IMR-90 (cell line): ENCODE measurements at regions of chr17 and their contacts with region 1.

Region 1: DNA sequence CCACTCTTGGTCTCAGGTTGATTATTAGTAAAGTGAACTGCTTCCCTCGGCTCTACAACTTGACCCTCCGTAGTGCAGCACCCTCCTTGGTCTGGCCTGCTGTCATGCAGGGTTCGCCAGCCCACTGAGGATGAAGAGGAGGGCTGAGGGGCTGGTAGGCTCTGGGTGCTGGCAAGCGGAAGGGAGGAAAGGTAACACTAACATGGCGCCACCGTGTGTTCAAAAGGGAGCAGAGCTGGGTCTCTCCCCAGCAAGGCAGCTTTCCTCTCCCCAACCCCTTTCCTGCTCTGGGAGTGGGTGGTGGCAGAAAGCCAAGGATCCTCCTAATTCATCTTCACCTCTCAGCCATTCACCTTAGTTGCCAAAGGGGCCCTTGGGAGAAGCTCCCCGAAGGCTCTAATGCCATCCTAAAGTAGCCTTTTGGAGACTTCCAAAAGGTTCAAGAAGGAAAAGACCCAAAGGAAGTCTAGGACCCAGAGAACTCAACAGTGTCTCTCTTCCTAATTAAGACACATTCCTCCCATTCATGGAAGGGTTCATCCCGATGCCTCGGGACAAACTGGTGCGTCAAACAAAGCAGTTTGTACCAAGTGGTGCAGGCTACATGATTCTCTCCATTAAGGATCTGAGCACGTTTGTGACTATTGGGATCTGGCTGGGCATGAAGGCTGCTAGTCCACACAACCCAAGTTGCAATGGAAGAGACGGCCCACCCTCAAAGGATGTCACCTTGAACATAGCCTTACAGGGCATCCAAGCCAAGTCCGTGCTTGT is 90.8 kb upstream of the TOB1 start:
- DNase-seq: peak; percentile 54
- ATAC-seq: peak; percentile 78
- H3K4me3 ChIP-seq: no peak overlapping the region
- H3K27ac ChIP-seq: no peak overlapping the region
- H3K4me1 ChIP-seq: peaks cover 20% of the 10 kb centered on the region
- H3K27me3 ChIP-seq: no peaks in the 10 kb centered on the region
- CTCF ChIP-seq: peak; percentile 78
- POLR2A ChIP-seq: peak; percentile 40; the same call in 1 of the 2 replicates
- RAD21 ChIP-seq: peak; percentile 78

Region 2: GRCh38 chr17:50783193-50783660 is 173.7 kb before region 1 on chr17:
- CTCF ChIA-PET with region 1: interaction called, 6 read pairs
- POLR2A ChIA-PET with region 1: interaction called, 3 read pairs
- dilution Hi-C with region 1: no loop called
- in situ Hi-C with region 1: loop called (anchors 5 kb)
- intact Hi-C with region 1: loop called (anchors 1 kb)
- DNase-seq: peak; percentile 85
- ATAC-seq: peak; percentile 96
- H3K4me3 ChIP-seq: no peak overlapping the region
- H3K27ac ChIP-seq: no peak overlapping the region
- H3K4me1 ChIP-seq: peaks cover 12% of the 10 kb centered on the region
- H3K27me3 ChIP-seq: peaks cover 2% of the 10 kb centered on the region
- CTCF ChIP-seq: peak; percentile 99
- POLR2A ChIP-seq: 0 out of 2 replicates have a peak, but pooled peaks have one; percentile 36
- RAD21 ChIP-seq: peak; percentile 99

Region 3: DNA sequence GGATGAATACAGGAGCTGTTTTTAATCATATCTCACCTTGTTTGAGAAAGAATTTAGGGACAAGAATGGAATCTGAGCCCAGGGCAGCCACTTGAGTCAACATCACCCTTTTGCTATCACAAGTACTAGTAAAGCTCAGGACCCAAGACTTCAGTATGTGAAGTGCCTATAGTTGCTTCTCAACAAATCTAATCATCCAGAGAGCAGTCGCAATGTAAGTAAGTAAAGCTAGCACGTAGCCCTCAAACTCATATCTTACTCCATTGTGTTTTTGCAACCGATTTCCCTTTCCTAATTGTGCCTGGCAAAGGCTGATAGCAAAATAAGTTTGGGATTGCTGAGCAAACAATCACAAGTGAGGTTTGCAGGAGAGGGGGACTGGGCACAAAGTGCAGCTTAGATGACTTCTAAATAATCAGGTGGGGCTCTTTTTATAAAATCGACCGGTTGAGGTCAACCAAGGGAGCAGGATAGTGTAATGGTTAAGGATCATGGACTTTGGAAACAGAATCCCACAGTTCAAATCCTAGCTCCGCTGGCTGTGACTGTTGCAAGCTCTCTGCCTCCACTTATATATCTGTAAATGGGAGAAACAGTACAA is 103.8 kb before region 1 on chr17:
- CTCF ChIA-PET with region 1: interaction called, 21 read pairs
- POLR2A ChIA-PET with region 1: interaction called, 4 read pairs
- dilution Hi-C with region 1: no loop called
- in situ Hi-C with region 1: no loop called
- intact Hi-C with region 1: loop called (anchors 1 kb)
- DNase-seq: no peak
- ATAC-seq: no peak
- H3K4me3 ChIP-seq: no peak overlapping the region
- H3K27ac ChIP-seq: no peak overlapping the region
- H3K4me1 ChIP-seq: 0 out of 2 replicates have a peak, but pooled peaks cover 2% of the 10 kb centered on the region
- H3K27me3 ChIP-seq: no peaks in the 10 kb centered on the region; the same call in 1 of the 2 replicates
- CTCF ChIP-seq: no peak
- POLR2A ChIP-seq: no peak
- RAD21 ChIP-seq: no peak

Region 4: GRCh38 chr17:51153210-51154072 is 196.5 kb after region 1 on chr17 and contains the start of gene NME1:
- CTCF ChIA-PET with region 1: no interaction called
- POLR2A ChIA-PET with region 1: no interaction called
- dilution Hi-C with region 1: no loop called
- in situ Hi-C with region 1: no loop called
- intact Hi-C with region 1: no loop called
- DNase-seq: peak; percentile 100
- ATAC-seq: peak; percentile 93
- H3K4me3 ChIP-seq: peak within 1 kb of the TSS; percentile 58
- H3K27ac ChIP-seq: peak within 1 kb of the TSS; percentile 51
- H3K4me1 ChIP-seq: no peaks in the 10 kb centered on the region
- H3K27me3 ChIP-seq: no peaks in the 10 kb centered on the region
- CTCF ChIP-seq: peak; percentile 97
- POLR2A ChIP-seq: peak; percentile 79
- RAD21 ChIP-seq: peak; percentile 93
- total RNA-seq, gene NME1: 261 and 312 TPM in 2 replicates